ENCODE measurements at regions of chr3 and their contacts with region 1.

Region 1: GRCh38 chr3:129934234-129935123 is 40.0 kb upstream of the TRH start:
- DNase-seq: peak; percentile 53
- ATAC-seq: peak; percentile 67

Region 2: DNA sequence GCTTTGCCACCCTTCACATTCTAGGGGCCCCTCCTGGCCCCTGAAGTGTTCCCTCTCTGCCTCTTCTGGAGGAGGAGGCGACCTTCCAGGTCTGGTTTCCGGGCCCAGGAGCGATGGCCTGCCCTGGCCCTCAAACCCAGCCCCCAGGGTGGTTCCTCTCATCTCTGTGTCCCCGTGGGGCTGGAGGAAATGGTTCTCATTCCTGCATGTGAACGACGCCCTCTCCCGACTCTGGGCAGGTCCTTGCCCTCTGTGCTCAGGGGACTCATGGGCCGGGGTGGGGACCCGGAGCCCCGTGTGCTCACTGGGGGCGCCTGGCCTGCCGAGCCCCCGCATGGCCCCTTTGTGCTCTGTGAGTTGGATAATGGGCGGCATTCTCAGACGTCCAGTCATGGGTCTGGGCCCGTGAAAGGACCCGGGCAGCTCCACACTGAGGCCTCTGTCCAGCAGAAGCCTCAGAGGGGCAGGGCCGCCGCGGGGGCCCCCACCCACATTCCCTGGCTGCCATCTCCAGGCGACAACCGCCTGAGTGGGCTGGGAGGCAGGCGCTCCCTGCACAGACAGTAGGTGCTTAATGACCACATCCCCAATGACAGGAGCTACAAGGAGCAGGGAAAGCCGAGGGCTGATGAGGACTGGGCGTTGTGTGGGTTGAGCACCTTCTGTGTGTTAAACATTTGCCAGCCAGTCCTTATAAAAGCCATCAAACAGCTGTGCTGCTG is 322.5 kb before region 1 on chr3:
- intact Hi-C with region 1: no loop called
- DNase-seq: peak; percentile 66
- ATAC-seq: peak; percentile 20

Region 3: GRCh38 chr3:129627429-129628168 is 306.9 kb before region 1 on chr3:
- intact Hi-C with region 1: loop called (anchors 5 kb)
- DNase-seq: peak; percentile 84
- ATAC-seq: peak; percentile 44

Measured in Right ventricle myocardium superior (tissue), 1 donor.